ENCODE measurements at regions of chr10 and their contacts with region 1.

Region 1: GRCh38 chr10:73997787-73998622 is at the start of gene VCL:
- DNase-seq: peak; percentile 98 to 99
- ATAC-seq: peak; percentile 98
- H3K4me3 ChIP-seq: peak within 1 kb of the TSS; percentile 86 to 95
- H3K27ac ChIP-seq: peak within 1 kb of the TSS; percentile 85 to 86
- H3K4me1 ChIP-seq: no peaks in the 10 kb centered on the region
- H3K27me3 ChIP-seq: no peaks in the 10 kb centered on the region
- total RNA-seq, gene VCL: 312 to 499 TPM

Region 2: DNA sequence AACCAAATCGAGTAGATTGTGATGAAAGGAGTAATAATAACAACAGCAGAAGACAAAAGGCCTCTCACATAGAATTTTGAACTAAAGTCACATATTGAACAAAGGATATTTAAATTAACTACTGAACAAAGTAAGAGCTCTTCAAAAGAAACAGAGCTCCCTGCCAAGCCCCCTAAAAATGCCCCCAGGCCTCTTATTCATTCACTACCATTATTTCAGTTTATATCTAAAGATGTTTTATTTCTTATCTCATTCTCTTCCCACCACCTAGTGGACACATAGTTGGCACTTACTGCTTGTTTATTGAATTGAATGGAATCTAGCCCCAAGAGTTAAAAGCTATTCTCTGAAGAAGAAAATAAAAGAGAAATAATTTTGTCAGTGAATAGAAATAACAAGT is 37.3 kb after region 1 on chr10:
- intact Hi-C with region 1: loop called in 1 of 2 experiments (anchors 5 kb)
- DNase-seq: no peak
- ATAC-seq: no peak
- H3K4me3 ChIP-seq: no peak overlapping the region
- H3K27ac ChIP-seq: no peak overlapping the region
- H3K4me1 ChIP-seq: peaks cover 2 to 10% of the 10 kb centered on the region in 2 donors
- H3K27me3 ChIP-seq: no peaks in the 10 kb centered on the region

Region 3: GRCh38 chr10:74047868-74048267 is 49.9 kb after region 1 on chr10:
- intact Hi-C with region 1: no loop called
- DNase-seq: no peak
- ATAC-seq: peak; percentile 46
- H3K4me3 ChIP-seq: no peak overlapping the region
- H3K27ac ChIP-seq: no peak overlapping the region
- H3K4me1 ChIP-seq: peaks cover 6 to 10% of the 10 kb centered on the region in 2 donors
- H3K27me3 ChIP-seq: no peaks in the 10 kb centered on the region

Region 4: DNA sequence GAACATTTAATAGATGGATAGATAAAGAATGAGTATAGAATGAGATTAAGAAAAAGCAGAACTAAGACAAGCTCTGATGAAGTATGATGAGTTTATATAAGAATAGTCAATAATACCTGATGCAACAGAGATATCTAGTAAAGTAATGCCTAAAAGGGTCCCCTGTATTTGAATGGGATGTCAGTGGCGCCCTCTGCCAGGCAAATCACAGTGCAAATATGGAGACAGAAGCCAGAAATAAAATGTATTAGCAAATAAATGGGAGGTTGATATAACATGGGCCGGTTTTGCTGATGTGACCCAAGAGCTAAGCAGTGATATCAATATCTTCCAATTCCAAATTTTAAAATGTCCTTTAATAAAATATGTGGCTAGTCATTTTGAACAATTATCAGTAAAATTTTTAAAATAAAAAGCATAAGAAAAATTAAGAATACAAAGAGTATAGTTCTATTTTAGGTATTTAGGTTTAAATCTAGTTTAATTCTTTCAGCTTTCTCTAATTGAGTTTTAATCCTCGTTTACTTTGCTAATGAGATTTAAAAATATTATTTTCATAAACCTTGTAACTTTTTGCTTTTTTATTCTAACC is 215.7 kb after region 1 on chr10:
- intact Hi-C with region 1: no loop called
- DNase-seq: no peak
- ATAC-seq: no peak
- H3K4me3 ChIP-seq: no peak overlapping the region
- H3K27ac ChIP-seq: no peak overlapping the region
- H3K4me1 ChIP-seq: no peaks in the 10 kb centered on the region
- H3K27me3 ChIP-seq: no peaks in the 10 kb centered on the region